Aorta (tissue), 5 donors: ENCODE measurements at regions of chr2 and their contacts with region 1.

Region 1: GRCh38 chr2:149040451-149040850 is 2.0 kb downstream of the LYPD6B start:
- DNase-seq: no peak
- ATAC-seq: no peak
- H3K4me3 ChIP-seq: no peak overlapping the region
- H3K27ac ChIP-seq: no peak overlapping the region
- H3K4me1 ChIP-seq: no peaks in the 10 kb centered on the region
- H3K27me3 ChIP-seq: peaks cover 0 to 2% of the 10 kb centered on the region in 2 donors

Region 2: DNA sequence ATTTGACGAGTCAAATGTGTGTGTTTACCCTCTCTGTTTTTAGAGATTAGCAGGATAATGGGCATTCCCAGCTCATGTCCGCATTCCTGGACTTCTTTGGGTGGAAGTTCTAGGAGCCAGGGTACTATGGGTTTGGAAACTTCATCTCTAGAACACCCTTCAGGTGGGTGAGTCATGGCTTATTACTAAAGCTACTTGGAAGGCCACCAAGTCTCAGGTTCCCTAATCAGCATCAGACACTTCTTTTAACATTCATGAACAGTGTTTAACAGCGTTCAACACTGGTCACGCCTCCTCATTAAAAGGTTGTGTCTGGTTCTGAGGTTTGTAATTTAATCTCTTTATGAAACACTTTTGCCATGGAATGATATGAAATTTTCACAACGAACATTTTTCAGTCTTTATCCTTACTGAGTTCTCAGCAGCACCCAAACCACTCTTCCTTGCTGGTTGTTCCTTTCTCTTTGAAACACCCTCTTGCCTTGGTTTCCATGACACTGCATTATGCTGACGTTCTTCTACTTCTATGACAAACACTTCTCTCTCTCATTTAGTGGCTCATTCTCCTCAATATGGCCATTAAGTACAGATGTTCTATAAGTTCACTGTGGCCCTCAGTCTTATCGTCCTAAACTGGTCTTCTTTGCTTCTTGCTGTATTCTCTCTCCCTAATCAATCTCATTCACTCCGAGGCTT is 497.8 kb after region 1 on chr2:
- intact Hi-C with region 1: loop called in 1 of 2 experiments (anchors 10 kb)
- DNase-seq: no peak
- ATAC-seq: no peak
- H3K4me3 ChIP-seq: no peak overlapping the region
- H3K27ac ChIP-seq: no peak overlapping the region
- H3K4me1 ChIP-seq: no peaks in the 10 kb centered on the region
- H3K27me3 ChIP-seq: no peaks in the 10 kb centered on the region

Region 3: DNA sequence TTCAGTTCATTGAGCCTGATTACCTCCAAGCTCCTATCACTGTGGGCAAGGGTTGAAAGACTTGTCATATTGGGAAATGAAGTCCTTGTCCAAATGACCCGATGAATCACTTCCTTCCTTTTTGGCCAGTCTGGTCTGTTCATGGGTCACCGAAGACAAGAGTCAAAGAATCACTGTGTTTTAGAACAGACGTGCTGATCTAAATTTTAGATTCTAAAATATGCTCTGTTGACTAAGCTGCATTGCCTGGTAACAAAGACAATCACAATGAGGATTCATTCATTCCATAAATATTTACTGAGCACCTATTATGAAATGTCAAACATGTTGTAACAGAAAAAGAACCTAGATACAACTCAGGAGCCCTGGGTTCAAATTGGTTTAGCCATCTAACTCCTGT is 1546.4 kb after region 1 on chr2:
- intact Hi-C with region 1: loop called in 1 of 2 experiments (anchors 10 kb)
- DNase-seq: no peak
- ATAC-seq: no peak
- H3K4me3 ChIP-seq: no peak overlapping the region
- H3K27ac ChIP-seq: no peak overlapping the region
- H3K4me1 ChIP-seq: peaks cover 2 to 3% of the 10 kb centered on the region in 2 donors
- H3K27me3 ChIP-seq: no peaks in the 10 kb centered on the region